ENCODE measurements at regions of chr12 and their contacts with region 1.

Region 1: GRCh38 chr12:26496170-26496569 is 300.8 kb downstream of the SSPN start:
- DNase-seq: no peak
- ATAC-seq: no peak
- H3K4me3 Mint-ChIP-seq: no peak overlapping the region
- H3K27ac Mint-ChIP-seq: peak overlapping the region; percentile 5; the same call in 1 of the 2 replicates
- H3K4me1 Mint-ChIP-seq: peaks cover 4% of the 10 kb centered on the region
- H3K27me3 Mint-ChIP-seq: no peaks in the 10 kb centered on the region
- CTCF ChIP-seq: no peak

Region 2: GRCh38 chr12:26524862-26525465 is 28.8 kb after region 1 on chr12:
- CTCF ChIA-PET with region 1: interaction called, 10 read pairs
- POLR2A ChIA-PET with region 1: interaction called, 6 read pairs
- DNase-seq: peak; percentile 53
- ATAC-seq: no peak; the same call in 1 of the 2 replicates
- H3K4me3 Mint-ChIP-seq: no peak overlapping the region
- H3K27ac Mint-ChIP-seq: no peak overlapping the region
- H3K4me1 Mint-ChIP-seq: peaks cover 22% of the 10 kb centered on the region
- H3K27me3 Mint-ChIP-seq: no peaks in the 10 kb centered on the region
- CTCF ChIP-seq: peak; percentile 78

Measured in WTC11 (cell line).